ENCODE measurements at regions of chr6 and their contacts with region 1.

Region 1: DNA sequence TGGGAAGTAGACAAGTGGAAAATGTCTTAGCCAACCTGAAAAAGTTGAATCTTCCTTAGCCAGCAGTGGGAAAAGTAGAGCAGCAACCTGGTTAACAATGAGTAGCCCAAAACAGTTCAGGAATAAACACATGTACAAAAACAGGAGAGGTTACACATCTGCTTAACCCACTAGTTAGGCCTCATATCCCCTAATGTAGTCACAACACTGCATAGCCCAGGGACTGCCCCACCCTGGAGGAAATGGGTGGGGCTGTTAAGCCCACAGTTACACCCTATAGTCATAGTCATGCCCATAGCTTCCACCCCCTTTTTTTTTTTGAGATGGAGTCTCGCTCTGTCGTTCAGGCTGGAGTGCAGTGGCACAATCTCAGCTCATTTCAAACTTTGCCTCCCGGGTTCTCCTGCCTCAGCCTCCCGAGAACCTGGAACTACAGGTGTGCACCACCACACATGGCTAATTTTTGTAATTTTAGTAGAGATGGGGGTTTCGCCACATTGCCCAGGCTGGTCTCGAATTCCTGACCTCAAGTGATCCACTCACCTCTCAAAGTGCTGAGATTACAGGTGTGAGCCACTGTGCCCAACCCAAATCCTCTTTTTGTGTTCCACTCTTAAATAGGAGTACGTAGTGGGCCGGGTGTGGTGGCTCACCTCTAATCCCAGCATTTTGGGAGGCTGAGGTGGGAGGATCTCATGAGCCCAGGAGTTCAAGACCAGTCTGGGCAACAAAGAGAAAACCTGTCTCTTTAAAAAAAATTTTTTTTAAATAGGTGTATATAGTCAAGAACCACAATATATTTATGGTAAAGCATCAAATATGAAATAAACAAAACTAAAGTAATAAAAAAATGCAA is 24.5 kb downstream of the ILRUN start:
- DNase-seq: peak; percentile 40 to 93 (median 70)
- ATAC-seq: peak; percentile 96
- H3K4me3 ChIP-seq: peak overlapping the region; percentile 14
- H3K4me3 Mint-ChIP-seq: peak overlapping the region; percentile 85
- H3K27ac ChIP-seq: peak overlapping the region; percentile 70 to 81
- H3K27ac Mint-ChIP-seq: peak overlapping the region; percentile 96
- H3K4me1 ChIP-seq: peaks cover 61% of the 10 kb centered on the region
- H3K4me1 Mint-ChIP-seq: peaks cover 70% of the 10 kb centered on the region
- H3K27me3 ChIP-seq: no peaks in the 10 kb centered on the region
- H3K27me3 Mint-ChIP-seq: no peaks in the 10 kb centered on the region
- CTCF ChIP-seq: no peak

Region 2: DNA sequence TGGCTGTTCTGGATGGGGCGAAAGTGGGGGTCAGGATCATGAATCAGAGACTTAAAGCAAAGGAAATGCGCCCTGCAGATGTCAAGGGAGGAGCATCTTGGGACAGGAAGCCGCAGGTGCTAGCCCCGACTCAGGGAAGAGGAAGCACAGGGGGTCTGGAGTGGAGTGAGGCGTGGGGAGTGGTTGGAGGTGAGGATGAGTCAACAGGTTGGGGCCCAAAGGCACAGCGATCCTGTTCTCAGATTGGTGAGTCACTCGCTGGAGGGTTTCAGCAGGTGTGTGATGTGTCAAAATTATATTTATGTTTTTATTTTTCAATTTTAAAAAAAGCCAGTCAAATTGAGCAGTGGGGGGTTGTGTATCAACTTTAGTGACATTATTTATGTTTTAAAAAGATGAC is 187.1 kb before region 1 on chr6:
- CTCF ChIA-PET with region 1: no interaction called
- POLR2A ChIA-PET with region 1: no interaction called
- intact Hi-C with region 1: no loop called
- DNase-seq: peak; percentile 19 to 82 (median 65)
- ATAC-seq: peak; percentile 93
- H3K4me3 ChIP-seq: peak overlapping the region; percentile 6
- H3K4me3 Mint-ChIP-seq: peak overlapping the region; percentile 39
- H3K27ac ChIP-seq: no peak overlapping the region
- H3K27ac Mint-ChIP-seq: peak overlapping the region; percentile 68
- H3K4me1 ChIP-seq: peaks cover 24% of the 10 kb centered on the region
- H3K4me1 Mint-ChIP-seq: peaks cover 36% of the 10 kb centered on the region
- H3K27me3 ChIP-seq: no peaks in the 10 kb centered on the region
- H3K27me3 Mint-ChIP-seq: no peaks in the 10 kb centered on the region
- CTCF ChIP-seq: no peak

Region 3: GRCh38 chr6:34644716-34645115 is 27.3 kb before region 1 on chr6:
- CTCF ChIA-PET with region 1: no interaction called
- POLR2A ChIA-PET with region 1: no interaction called
- intact Hi-C with region 1: no loop called
- DNase-seq: no peak
- ATAC-seq: no peak
- H3K4me3 ChIP-seq: no peak overlapping the region
- H3K4me3 Mint-ChIP-seq: no peak overlapping the region
- H3K27ac ChIP-seq: no peak overlapping the region
- H3K27ac Mint-ChIP-seq: peak overlapping the region; percentile 19
- H3K4me1 ChIP-seq: no peaks in the 10 kb centered on the region
- H3K4me1 Mint-ChIP-seq: peaks cover 50% of the 10 kb centered on the region
- H3K27me3 ChIP-seq: no peaks in the 10 kb centered on the region
- H3K27me3 Mint-ChIP-seq: no peaks in the 10 kb centered on the region
- CTCF ChIP-seq: no peak

Region 4: GRCh38 chr6:34656378-34657036 is 15.5 kb before region 1 on chr6:
- CTCF ChIA-PET with region 1: interaction called, 5 read pairs
- POLR2A ChIA-PET with region 1: interaction called, 69 read pairs
- intact Hi-C with region 1: loop called (anchors 1 to 2 kb)
- DNase-seq: peak in 6 of 14 experiments; percentile 6 to 60 (median 53)
- ATAC-seq: peak; percentile 61
- H3K4me3 ChIP-seq: peak overlapping the region; percentile 57
- H3K4me3 Mint-ChIP-seq: peak overlapping the region; percentile 90
- H3K27ac ChIP-seq: peak overlapping the region; percentile 55 to 85
- H3K27ac Mint-ChIP-seq: peak overlapping the region; percentile 84
- H3K4me1 ChIP-seq: peaks cover 31% of the 10 kb centered on the region
- H3K4me1 Mint-ChIP-seq: peaks cover 64% of the 10 kb centered on the region
- H3K27me3 ChIP-seq: no peaks in the 10 kb centered on the region
- H3K27me3 Mint-ChIP-seq: no peaks in the 10 kb centered on the region
- CTCF ChIP-seq: no peak

Region 5: DNA sequence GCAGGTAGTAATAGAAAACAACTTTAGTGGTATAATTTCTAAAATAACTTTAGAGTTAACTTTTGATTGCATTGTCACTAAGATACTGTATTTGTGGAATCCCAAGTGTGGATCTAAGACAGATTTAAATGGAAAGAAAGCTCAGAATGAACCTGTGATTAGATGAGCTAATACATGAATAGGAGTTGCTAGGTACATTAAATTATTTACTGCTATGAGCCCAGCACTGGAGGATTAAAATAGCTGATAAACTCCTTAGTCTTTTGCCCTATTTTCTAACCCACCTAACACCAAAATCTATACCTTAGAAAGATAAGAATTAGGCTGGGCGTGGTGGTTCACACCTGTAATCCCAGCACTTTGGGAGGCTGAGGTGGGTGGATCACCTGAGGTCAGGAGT is 96.1 kb after region 1 on chr6:
- CTCF ChIA-PET with region 1: no interaction called
- POLR2A ChIA-PET with region 1: no interaction called
- intact Hi-C with region 1: no loop called
- DNase-seq: no peak
- ATAC-seq: no peak
- H3K4me3 ChIP-seq: no peak overlapping the region
- H3K4me3 Mint-ChIP-seq: no peak overlapping the region
- H3K27ac ChIP-seq: no peak overlapping the region
- H3K27ac Mint-ChIP-seq: no peak overlapping the region
- H3K4me1 ChIP-seq: peaks cover 4% of the 10 kb centered on the region
- H3K4me1 Mint-ChIP-seq: peaks cover 17% of the 10 kb centered on the region
- H3K27me3 ChIP-seq: no peaks in the 10 kb centered on the region
- H3K27me3 Mint-ChIP-seq: no peaks in the 10 kb centered on the region
- CTCF ChIP-seq: no peak